ENCODE measurements at regions of chr4 and their contacts with region 1.

Region 1: DNA sequence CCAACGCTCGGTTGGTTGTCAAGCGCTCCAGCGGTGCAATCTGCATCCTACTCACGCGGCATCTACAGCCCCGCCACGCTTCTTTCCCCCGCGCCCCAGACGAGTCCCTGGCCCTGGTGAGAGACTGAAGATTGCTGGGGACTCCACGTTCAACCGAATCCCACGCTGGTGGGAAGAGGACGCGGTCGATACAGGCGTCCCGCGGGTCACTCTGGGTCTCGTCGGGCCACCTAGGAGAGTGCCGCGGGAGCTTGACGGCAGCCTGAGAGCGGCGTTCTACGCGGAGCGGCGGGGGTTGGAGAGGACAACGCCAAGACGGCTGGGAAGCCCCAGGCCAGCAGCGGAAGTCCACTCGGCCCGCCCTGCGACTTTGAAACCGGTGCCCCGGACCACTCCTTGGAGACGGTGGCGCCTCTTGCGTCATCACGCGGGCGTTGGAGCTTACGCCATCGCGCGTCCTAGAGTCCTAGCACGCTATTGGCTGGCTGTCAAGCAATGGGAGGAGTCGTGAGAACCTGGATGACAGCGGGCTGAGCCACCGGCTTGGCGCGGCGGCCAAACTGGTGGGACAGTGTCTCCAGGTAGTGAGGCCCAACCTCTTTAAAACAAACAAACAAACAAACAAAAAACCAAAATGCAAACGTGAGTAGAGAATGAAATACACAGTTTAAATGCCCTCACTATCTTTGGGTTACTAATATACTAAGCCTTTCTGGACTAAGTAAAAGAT is at the start of gene SCLT1:
- DNase-seq: peak; percentile 95
- H3K4me3 Mint-ChIP-seq: peak within 1 kb of the TSS; percentile 37
- H3K27ac Mint-ChIP-seq: peak within 1 kb of the TSS; percentile 20
- H3K4me1 Mint-ChIP-seq: peaks cover 45% of the 10 kb centered on the region
- H3K27me3 Mint-ChIP-seq: no peaks in the 10 kb centered on the region
- total RNA-seq, gene SCLT1: 23.7 and 24.1 TPM in 2 replicates

Region 2: DNA sequence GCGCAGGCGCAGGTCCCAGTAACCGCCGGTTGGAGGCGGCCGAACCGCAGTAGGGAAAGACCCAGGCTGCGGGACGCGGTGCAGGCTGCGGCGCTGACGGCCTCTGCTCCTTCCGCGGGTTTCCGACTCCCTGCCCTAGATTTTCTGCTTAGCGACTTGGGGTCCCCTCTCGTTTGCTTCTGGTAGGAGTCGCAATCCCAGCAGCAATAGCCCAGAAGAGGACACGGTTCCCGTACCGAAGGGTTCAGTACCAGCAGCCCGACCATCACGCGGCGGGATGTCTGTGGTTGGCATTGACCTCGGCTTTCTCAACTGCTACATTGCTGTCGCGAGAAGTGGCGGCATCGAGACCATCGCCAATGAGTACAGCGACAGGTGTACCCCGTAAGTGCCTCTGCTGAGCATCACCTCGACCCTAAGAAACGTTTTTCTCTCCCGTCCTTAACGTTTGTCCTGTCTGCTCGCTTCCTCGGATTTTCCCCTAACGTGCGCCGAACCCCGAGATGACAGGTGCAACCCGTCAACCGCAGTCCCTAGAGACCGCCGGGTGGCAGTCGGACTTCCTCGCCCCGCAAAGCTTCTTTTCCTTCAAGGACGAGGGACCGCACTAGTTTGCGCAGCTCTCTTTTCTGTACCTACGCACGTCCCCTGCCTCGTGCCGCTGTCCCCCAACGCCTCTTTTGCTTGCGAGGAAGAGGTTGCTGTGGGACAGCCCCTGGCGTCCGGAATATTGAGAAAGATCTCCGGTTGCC is 1310.9 kb before region 1 on chr4 and contains the start of gene HSPA4L:
- intact Hi-C with region 1: loop called (anchors 5 kb)
- DNase-seq: peak; percentile 59
- H3K4me3 Mint-ChIP-seq: peak within 1 kb of the TSS; percentile 88
- H3K27ac Mint-ChIP-seq: peak within 1 kb of the TSS; percentile 80
- H3K4me1 Mint-ChIP-seq: peaks cover 24% of the 10 kb centered on the region
- H3K27me3 Mint-ChIP-seq: peaks cover 62% of the 10 kb centered on the region
- total RNA-seq, gene HSPA4L: 5.0 and 5.2 TPM in 2 replicates

Region 3: DNA sequence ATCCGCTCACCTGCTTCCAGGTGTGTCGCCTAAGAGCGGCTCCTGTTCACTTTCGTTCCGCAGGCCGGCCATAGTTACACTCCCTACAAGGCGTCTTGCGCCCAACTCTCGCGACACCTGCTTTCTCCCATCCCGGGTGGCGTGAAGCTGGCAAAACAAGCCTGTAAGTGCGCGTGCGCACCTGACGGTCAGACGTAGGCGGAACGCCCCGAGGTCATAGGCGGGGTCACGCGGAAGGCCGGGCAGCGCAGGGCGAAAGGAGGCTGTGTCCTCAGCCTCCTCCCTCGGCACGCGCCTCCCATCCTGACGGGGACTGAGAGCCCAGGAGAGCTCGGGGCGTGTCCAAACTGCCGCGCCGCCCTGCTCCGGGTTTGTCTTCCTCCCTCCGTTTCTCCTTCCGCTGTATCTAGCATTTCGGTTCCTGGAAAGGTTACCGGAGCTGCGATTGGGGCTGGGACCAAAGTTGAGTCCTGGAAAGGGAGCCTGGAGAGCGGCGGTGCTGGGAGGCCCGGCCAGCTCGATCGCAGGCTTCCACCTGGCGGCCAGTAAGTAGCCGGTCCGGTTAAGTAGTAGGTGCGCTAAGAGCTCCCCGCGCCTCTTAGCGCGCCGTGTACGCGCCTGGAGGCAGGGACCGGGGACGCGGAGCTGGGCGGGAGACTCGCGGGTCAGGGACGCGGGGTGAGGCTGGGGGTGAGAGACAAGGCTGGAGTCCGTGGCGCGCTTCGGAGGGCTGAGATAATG is 1128.1 kb before region 1 on chr4 and contains the starts of genes ABHD18 and MFSD8:
- intact Hi-C with region 1: loop called (anchors 10 kb)
- DNase-seq: peak; percentile 100
- H3K4me3 Mint-ChIP-seq: peak within 1 kb of the TSS; percentile 95
- H3K27ac Mint-ChIP-seq: peak within 1 kb of the TSS; percentile 93
- H3K4me1 Mint-ChIP-seq: peaks cover 26% of the 10 kb centered on the region
- H3K27me3 Mint-ChIP-seq: no peaks in the 10 kb centered on the region
- total RNA-seq, gene ABHD18: 21.0 and 23.9 TPM in 2 replicates
- total RNA-seq, gene MFSD8: 18.7 and 20.2 TPM in 2 replicates

Region 4: GRCh38 chr4:128287871-128288688 is 805.3 kb before region 1 on chr4:
- intact Hi-C with region 1: loop called (anchors 1 kb)
- DNase-seq: peak; percentile 97
- H3K4me3 Mint-ChIP-seq: peak overlapping the region; percentile 95
- H3K27ac Mint-ChIP-seq: peak overlapping the region; percentile 91
- H3K4me1 Mint-ChIP-seq: peaks cover 29% of the 10 kb centered on the region
- H3K27me3 Mint-ChIP-seq: no peaks in the 10 kb centered on the region

Region 5: GRCh38 chr4:128338634-128339355 is 754.6 kb before region 1 on chr4:
- intact Hi-C with region 1: no loop called
- DNase-seq: no peak
- H3K4me3 Mint-ChIP-seq: no peak overlapping the region
- H3K27ac Mint-ChIP-seq: no peak overlapping the region
- H3K4me1 Mint-ChIP-seq: peaks cover 2% of the 10 kb centered on the region
- H3K27me3 Mint-ChIP-seq: no peaks in the 10 kb centered on the region

Region 6: DNA sequence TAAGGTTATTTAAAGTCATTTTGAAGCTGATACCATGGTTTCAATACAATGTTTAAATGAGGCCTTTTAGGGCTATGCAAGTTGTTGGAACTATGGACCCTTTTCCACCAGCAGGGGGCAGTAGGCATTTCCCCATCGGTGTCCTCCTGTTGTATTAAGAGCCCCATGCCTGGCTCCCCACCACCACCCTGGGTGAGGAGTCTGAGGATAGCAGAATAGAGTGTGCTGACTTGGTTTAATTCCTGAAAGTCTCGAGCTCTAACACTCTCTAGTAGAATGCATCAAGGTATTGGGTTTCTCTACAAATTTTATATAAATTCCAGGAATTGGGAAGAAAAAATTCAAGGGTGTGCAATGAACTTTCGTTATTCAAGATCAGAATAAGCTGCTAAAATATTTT is 518.6 kb before region 1 on chr4:
- intact Hi-C with region 1: no loop called
- DNase-seq: peak; percentile 51
- H3K4me3 Mint-ChIP-seq: no peak overlapping the region
- H3K27ac Mint-ChIP-seq: no peak overlapping the region
- H3K4me1 Mint-ChIP-seq: no peaks in the 10 kb centered on the region
- H3K27me3 Mint-ChIP-seq: peaks cover 2% of the 10 kb centered on the region

Region 7: GRCh38 chr4:128663336-128663735 is 430.0 kb before region 1 on chr4:
- intact Hi-C with region 1: no loop called
- DNase-seq: no peak
- H3K4me3 Mint-ChIP-seq: no peak overlapping the region
- H3K27ac Mint-ChIP-seq: no peak overlapping the region
- H3K4me1 Mint-ChIP-seq: no peaks in the 10 kb centered on the region
- H3K27me3 Mint-ChIP-seq: no peaks in the 10 kb centered on the region

Region 8: GRCh38 chr4:129046055-129046959 is 47.0 kb before region 1 on chr4:
- intact Hi-C with region 1: loop called (anchors 2 kb)
- DNase-seq: no peak
- H3K4me3 Mint-ChIP-seq: no peak overlapping the region
- H3K27ac Mint-ChIP-seq: no peak overlapping the region
- H3K4me1 Mint-ChIP-seq: peaks cover 11% of the 10 kb centered on the region
- H3K27me3 Mint-ChIP-seq: no peaks in the 10 kb centered on the region

Region 9: DNA sequence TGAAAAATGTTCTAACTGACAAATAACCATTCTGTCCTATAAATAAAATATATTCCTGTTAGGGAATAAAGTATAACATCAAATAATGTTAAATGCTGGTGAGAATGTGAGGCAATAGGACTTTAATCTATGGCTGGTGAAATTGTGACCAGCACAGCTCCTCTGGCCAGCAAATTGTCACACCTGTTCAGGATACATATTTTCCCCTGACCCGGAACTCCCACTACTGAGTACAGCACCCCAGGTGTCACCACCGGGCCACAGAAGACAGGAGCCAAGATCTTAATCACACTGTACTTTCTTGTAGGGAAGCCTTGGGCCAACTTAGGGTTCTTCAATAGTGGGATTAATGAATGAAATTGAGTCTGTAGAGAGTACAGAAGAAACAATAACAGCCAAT is 35.8 kb after region 1 on chr4:
- intact Hi-C with region 1: no loop called
- DNase-seq: no peak
- H3K4me3 Mint-ChIP-seq: no peak overlapping the region
- H3K27ac Mint-ChIP-seq: no peak overlapping the region
- H3K4me1 Mint-ChIP-seq: no peaks in the 10 kb centered on the region
- H3K27me3 Mint-ChIP-seq: no peaks in the 10 kb centered on the region

Measured in activated T-helper 2 cell treated with anti-CD3 and anti-CD28 coated beads, Interferon-gamma antibody, Interleukin-2, Interleukin-4, amounts not matched to agents 10 μg/mL and 5 μg/mL and 100 μg/mL, durations not matched to agents 14 hours and 24 hours and 36 hours (primary cell).